Activated CD4-positive, alpha-beta memory T cell treated with anti-CD3 and anti-CD28 coated beads for 36 hours (primary cell): ENCODE measurements at regions of chr3 and their contacts with region 1.

Region 1: GRCh38 chr3:107522510-107523288 is at the start of gene BBX:
- DNase-seq: peak; percentile 96
- H3K4me3 Mint-ChIP-seq: peak within 1 kb of the TSS; percentile 94
- H3K27ac Mint-ChIP-seq: peak within 1 kb of the TSS; percentile 95
- H3K4me1 Mint-ChIP-seq: peaks cover 23% of the 10 kb centered on the region
- H3K27me3 Mint-ChIP-seq: no peaks in the 10 kb centered on the region
- total RNA-seq, gene BBX: 39.9 to 40.9 TPM

Region 2: DNA sequence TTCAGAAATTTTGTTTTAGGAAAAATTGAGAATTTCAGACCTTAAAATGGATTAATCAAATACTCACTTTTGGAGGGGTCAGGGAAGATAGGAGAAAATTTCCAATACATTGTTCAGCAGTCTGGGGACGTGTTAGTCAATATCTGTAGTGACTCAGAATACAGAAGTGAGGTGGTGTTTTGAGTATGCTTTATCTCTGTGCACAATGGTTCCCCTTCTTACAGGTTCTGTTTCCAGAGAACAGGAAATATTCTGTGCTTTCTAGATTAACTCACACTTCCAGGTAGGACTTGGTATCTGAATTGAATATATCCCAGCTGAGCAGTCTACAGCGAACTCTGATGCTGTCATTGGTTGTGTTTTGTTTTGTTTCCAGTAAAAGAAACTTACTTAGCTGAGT is 176.1 kb before region 1 on chr3:
- CTCF ChIA-PET with region 1: no interaction called
- POLR2A ChIA-PET with region 1: no interaction called
- intact Hi-C with region 1: no loop called
- DNase-seq: no peak
- H3K4me3 Mint-ChIP-seq: no peak overlapping the region
- H3K27ac Mint-ChIP-seq: no peak overlapping the region
- H3K4me1 Mint-ChIP-seq: peaks cover 9% of the 10 kb centered on the region
- H3K27me3 Mint-ChIP-seq: no peaks in the 10 kb centered on the region

Region 3: DNA sequence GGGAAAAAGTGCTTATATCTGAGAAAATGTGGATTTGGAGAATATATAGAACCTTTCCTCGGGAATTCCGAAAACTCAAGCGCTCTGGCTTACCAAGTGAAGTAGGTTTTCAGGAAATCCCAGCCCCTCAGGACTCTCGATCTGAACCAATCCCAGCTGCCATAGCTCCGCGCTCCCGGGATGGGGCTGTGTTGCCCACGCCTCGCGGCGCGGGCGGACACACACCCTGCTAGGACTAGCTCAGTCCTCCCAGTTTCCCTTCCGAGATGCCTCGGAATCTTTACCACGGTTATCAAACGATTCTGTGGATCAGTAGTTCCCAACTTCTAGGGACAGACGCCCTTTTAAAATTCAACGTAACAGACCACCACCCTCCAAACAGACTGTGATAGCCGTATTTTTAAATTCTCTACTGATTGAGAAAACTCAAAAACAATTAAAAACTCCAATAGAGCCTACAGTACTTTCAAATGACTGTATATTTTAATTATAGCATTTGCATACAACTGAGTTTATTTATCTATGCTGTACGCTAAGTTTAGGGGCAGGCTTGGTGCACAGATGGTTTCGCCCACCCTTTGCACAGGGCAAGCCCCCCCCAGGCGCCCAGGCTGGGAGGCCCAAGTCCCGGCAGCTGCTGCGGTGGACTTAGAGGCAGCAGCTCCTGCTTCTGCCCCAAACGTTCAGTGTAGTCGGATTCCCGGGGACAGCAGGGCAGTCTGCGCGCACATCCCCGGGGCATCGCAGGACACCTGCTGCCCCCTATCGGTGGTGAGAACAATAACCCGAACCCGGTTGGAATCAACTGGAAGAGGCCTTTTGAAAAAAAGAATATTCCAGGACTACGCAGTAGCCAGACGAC is 93.1 kb before region 1 on chr3:
- CTCF ChIA-PET with region 1: interaction called, 4 read pairs
- POLR2A ChIA-PET with region 1: interaction called, 6 read pairs
- intact Hi-C with region 1: loop called (anchors 1 kb)
- DNase-seq: peak; percentile 71
- H3K4me3 Mint-ChIP-seq: peak overlapping the region; percentile 62
- H3K27ac Mint-ChIP-seq: no peak overlapping the region
- H3K4me1 Mint-ChIP-seq: peaks cover 12% of the 10 kb centered on the region
- H3K27me3 Mint-ChIP-seq: peaks cover 3% of the 10 kb centered on the region

Region 4: DNA sequence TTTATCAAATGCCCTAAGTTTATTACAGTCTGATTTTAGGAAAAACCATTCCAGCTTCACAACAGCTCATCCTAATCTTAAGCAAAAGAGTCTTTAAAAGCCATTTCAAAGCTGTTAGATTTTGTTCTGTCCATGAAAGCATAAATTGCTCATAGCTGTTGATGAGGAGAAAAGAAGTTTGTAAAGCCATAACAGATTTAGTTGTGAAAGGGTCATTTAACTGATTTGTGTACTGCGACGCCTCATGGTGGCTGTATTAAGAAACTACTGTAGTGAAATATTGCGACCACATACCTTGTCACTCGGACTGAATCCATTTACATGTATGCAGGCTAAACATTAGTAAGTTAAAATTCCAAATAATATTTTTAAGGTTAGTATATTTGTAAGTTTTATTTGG is 21.0 kb after region 1 on chr3:
- CTCF ChIA-PET with region 1: no interaction called
- POLR2A ChIA-PET with region 1: no interaction called
- intact Hi-C with region 1: loop called (anchors 2 kb)
- DNase-seq: no peak
- H3K4me3 Mint-ChIP-seq: no peak overlapping the region
- H3K27ac Mint-ChIP-seq: no peak overlapping the region
- H3K4me1 Mint-ChIP-seq: peaks cover 26% of the 10 kb centered on the region
- H3K27me3 Mint-ChIP-seq: no peaks in the 10 kb centered on the region

Region 5: GRCh38 chr3:107598926-107599771 is 76.5 kb after region 1 on chr3:
- CTCF ChIA-PET with region 1: interaction called, 5 read pairs
- POLR2A ChIA-PET with region 1: no interaction called
- intact Hi-C with region 1: loop called (anchors 1 kb)
- DNase-seq: peak; percentile 64
- H3K4me3 Mint-ChIP-seq: peak overlapping the region; percentile 79
- H3K27ac Mint-ChIP-seq: peak overlapping the region; percentile 91
- H3K4me1 Mint-ChIP-seq: peaks cover 58% of the 10 kb centered on the region
- H3K27me3 Mint-ChIP-seq: no peaks in the 10 kb centered on the region

Region 6: GRCh38 chr3:107660306-107660976 is 137.7 kb after region 1 on chr3:
- CTCF ChIA-PET with region 1: no interaction called
- POLR2A ChIA-PET with region 1: no interaction called
- intact Hi-C with region 1: loop called (anchors 5 kb)
- DNase-seq: no peak
- H3K4me3 Mint-ChIP-seq: no peak overlapping the region
- H3K27ac Mint-ChIP-seq: no peak overlapping the region
- H3K4me1 Mint-ChIP-seq: peaks cover 23% of the 10 kb centered on the region
- H3K27me3 Mint-ChIP-seq: no peaks in the 10 kb centered on the region

Region 7: GRCh38 chr3:107710851-107711250 is 188.2 kb after region 1 on chr3:
- CTCF ChIA-PET with region 1: no interaction called
- POLR2A ChIA-PET with region 1: no interaction called
- intact Hi-C with region 1: no loop called
- DNase-seq: no peak
- H3K4me3 Mint-ChIP-seq: no peak overlapping the region
- H3K27ac Mint-ChIP-seq: no peak overlapping the region
- H3K4me1 Mint-ChIP-seq: peaks cover 4% of the 10 kb centered on the region
- H3K27me3 Mint-ChIP-seq: no peaks in the 10 kb centered on the region